Esophagus muscularis mucosa (tissue), 4 donors: ENCODE measurements at regions of chr14 and their contacts with region 1.

Region 1: GRCh38 chr14:34461334-34462131 is 507 bp downstream of the SPTSSA start:
- DNase-seq: no peak
- H3K4me3 ChIP-seq: peak overlapping the region; percentile 58 to 91 (median 80)
- H3K27ac ChIP-seq: peak overlapping the region; percentile 89 to 99 (median 97)
- H3K4me1 ChIP-seq: peaks cover 11 to 42% (median 39%) of the 10 kb centered on the region in 4 donors
- H3K27me3 ChIP-seq: no peaks in the 10 kb centered on the region
- CTCF ChIP-seq: no peak
- EP300 ChIP-seq: no peak
- POLR2A ChIP-seq: no peak

Region 2: DNA sequence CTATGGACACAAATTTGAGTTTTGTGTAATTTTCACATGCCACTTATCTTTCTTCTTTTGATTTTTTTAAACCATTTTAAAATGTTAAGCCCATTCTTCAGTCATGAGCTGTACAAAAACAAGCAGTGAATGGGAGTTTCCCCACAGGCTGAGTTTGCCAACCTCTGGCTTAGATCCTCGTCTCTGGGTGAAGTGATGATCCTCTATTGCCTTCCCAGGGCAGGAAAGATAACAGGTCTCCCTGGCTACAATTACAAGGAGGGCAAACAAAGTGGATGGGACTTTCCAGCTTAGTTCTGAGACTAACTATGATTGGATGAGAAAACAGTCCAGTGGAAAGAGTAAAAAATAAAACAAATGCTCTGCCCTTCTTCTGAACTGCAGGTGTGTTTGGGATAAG is 203.2 kb before region 1 on chr14:
- intact Hi-C with region 1: no loop called
- DNase-seq: no peak
- H3K4me3 ChIP-seq: no peak overlapping the region
- H3K27ac ChIP-seq: peak overlapping the region in 1 of 4 donors; percentile 3
- H3K4me1 ChIP-seq: peaks cover 0 to 12% (median 2%) of the 10 kb centered on the region in 4 donors
- H3K27me3 ChIP-seq: no peaks in the 10 kb centered on the region
- CTCF ChIP-seq: no peak
- EP300 ChIP-seq: no peak
- POLR2A ChIP-seq: no peak

Region 3: DNA sequence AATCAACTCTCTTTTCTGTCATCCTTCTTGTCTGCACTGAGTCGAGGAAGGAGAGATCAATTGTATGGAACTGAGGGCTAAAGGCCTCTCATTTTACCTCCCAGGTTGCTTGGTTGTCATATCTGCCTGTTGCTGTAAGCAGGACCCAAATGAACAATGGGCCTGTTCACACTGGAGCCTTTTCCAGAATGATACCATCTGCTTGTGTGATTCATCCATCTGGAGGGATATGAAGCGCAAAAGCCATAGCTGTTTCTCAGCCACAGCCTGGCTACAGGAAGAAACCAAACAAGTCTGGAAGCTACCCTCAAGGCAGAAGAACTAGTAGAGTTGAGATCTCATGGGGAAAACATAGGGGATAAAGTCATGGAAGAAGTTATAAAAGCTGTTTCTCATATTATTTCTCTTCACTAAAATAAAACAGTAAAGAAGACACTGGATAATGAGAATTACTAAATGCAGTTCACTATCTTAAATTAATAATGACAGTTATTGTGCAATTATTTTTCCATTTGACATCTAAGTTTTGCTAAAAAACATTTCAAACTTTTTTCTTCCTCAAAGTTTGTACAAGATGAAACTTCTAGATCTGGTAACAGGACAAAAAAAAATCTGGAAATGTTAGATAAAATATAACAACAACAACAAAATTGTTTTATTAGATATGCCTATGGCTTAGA is 105.8 kb before region 1 on chr14:
- intact Hi-C with region 1: no loop called
- DNase-seq: no peak
- H3K4me3 ChIP-seq: no peak overlapping the region
- H3K27ac ChIP-seq: peak overlapping the region; percentile 40 to 53 (median 46)
- H3K4me1 ChIP-seq: peaks cover 0 to 20% (median 2%) of the 10 kb centered on the region in 4 donors
- H3K27me3 ChIP-seq: no peaks in the 10 kb centered on the region
- CTCF ChIP-seq: no peak
- EP300 ChIP-seq: no peak
- POLR2A ChIP-seq: no peak

Region 4: DNA sequence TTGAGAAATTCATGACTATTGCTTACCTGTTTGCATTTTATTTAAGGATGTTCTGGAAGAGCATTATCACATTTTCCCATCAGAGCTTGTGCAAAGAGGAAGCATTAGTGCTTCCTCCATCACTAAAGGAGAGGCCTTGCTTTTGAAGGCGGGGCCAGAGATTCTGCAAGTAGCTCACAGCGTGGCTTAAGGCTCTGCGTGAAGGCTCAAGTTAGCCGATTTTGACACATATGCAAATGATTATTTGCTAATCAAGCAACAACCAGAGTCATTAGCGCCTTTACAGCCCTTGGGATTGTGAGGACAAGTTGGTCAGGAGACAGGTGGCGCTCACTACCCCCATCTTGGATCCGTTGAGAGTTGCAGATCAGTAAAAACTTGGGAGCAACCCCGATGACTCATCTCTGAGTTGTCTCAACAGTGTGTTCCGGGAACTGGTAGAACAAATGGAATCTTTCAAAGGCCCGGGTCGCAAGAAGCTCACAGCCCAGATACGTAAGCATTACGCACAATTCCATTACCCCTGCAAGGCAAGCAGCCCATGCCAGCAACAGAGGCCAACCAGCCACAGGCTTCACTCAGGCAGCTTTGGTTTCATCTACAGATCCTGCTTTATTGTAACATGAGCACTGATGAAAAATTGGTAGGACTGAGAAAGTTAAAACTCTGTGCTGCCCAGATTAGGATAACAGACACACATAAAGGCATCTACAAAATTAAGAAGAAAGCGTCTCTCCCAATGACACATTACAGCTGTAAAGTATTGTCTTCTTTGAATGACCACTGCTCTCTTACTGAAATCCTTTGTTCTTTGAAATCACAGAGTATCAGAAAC is 35.4 kb after region 1 on chr14:
- intact Hi-C with region 1: loop called (anchors 2 kb)
- DNase-seq: peak; percentile 96
- H3K4me3 ChIP-seq: peak overlapping the region in 2 of 4 donors; percentile 10 to 27
- H3K27ac ChIP-seq: peak overlapping the region; percentile 78 to 89 (median 84)
- H3K4me1 ChIP-seq: peaks cover 4 to 24% (median 21%) of the 10 kb centered on the region in 4 donors
- H3K27me3 ChIP-seq: no peaks in the 10 kb centered on the region
- CTCF ChIP-seq: peak; percentile 6 to 37 (median 34)
- EP300 ChIP-seq: peak; percentile 76
- POLR2A ChIP-seq: no peak

Region 5: DNA sequence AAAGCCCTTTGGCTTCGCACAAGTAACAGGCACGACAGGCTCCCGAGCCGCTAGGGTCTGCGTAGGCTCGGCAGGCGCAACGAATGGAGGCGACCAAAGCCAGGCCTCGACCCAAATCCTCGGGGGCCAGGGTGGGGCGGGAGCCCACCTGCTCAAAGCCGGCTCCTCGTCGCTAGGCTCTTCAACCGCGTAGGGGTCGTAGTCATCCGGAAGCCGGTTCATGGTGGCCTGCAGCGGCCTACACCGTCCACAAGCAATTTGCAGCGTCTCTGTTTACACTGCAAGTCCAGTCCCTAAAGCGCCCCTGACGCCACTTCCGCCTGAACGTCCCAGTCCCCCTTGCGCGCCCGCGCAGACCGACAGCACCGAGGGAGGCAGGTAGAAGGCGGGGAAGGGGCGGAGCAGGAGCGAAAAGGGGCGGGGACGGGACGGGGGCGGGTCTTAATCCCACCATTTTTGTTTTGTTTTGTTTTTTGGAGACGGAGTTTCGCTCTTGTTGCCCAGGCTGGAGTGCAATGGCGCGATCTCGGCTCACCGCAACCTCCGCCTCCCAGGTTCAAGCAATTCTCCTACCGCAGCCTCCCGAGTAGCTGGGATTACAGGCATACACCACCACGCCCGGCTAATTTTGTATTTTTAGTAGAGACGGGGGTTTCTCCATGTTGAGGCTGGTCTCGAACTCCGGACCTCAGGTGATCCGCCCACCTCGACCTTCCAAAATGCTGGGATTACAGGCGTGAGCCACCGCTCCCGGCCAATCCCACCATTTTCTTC is 78.1 kb after region 1 on chr14 and contains the start of gene EAPP:
- intact Hi-C with region 1: loop called (anchors 10 kb)
- DNase-seq: peak; percentile 99
- H3K4me3 ChIP-seq: peak within 1 kb of the TSS; percentile 66 to 81 (median 74)
- H3K27ac ChIP-seq: peak within 1 kb of the TSS; percentile 90 to 95 (median 92)
- H3K4me1 ChIP-seq: peaks cover 23 to 34% (median 32%) of the 10 kb centered on the region in 4 donors
- H3K27me3 ChIP-seq: no peaks in the 10 kb centered on the region
- CTCF ChIP-seq: peak in 2 of 3 experiments; percentile 6 to 9
- EP300 ChIP-seq: no peak
- POLR2A ChIP-seq: peak; percentile 86
- total RNA-seq, gene EAPP: 24.1 to 33.8 (median 30.4) TPM

Region 6: DNA sequence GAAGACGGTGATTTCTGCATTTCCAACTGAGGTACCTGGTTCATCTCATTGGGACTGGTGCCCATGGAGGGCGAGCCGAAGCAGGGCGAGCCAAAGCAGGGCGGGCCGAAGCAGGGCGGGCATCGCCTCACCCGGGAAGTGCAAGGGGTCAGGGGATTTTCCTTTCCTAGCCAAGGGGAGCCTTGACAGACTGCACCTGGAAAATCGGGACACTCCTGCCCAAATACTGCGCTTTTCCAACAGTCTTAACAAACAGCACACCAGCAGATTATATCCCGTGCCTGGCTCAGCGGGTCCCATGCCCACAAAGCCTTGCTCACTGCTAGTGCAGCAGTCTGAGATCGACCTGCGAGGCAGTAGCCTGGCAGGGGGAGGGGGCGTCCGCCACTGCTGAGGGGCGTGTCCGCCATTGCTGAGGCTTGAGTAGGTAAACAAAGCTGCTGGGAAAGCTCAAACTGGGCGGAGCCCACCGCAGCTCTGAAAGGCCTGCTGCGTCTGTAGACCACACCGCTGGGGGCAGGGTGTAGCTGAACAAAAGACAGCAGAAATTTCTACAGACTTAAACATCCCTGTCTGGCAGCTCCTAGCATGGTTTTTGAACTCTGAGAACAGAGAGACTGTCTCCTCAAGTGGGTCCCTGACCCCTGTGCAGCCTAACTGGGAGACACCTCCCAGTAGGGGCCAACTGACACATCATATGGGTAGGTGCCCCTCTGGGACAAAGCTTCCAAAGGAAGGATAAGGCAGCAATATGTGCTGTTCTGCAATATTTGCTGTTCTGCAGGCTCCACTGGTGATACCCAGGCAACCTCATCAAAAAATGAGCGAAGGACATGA is 336.4 kb after region 1 on chr14:
- intact Hi-C with region 1: no loop called
- DNase-seq: no peak
- H3K4me3 ChIP-seq: no peak overlapping the region
- H3K27ac ChIP-seq: no peak overlapping the region
- H3K4me1 ChIP-seq: no peaks in the 10 kb centered on the region
- H3K27me3 ChIP-seq: no peaks in the 10 kb centered on the region
- CTCF ChIP-seq: no peak
- EP300 ChIP-seq: no peak
- POLR2A ChIP-seq: no peak